HEK293 (cell line): ENCODE measurements at regions of chr1 and their contacts with region 1.

Region 1: DNA sequence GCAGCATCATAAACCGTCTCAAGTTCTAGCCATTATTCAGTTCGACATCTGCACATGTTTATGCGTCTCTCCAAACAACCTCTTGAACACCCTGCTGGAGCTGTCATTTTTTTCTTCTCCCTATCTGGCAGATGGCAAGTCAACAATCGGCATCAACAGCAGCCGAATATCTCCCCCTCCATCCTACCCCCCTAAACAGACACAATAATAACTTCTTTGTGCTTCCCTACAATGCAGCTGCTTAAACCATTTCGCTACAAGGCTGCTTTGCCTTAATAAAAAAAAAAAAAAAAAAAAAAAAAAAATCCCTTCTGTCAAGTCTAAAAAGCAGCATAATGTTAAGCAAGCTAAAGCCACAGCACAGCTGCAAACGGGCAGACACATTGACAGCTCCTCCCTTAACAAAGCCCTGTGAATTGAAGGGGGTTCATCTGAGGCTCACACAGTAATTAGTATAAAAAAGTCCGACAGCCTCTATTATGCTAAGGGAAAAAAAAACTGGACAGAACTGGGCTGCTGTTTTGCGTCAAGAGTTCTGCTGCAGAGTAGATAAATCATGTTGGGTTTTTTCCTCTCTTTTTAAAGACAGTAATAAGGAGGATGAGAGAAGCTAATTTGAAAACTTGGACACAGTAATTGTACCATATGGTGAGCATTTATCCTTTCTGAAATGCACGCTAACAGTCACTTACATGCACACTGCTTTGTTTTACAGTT is 136.4 kb downstream of the AKT3 start:
- H3K4me3 ChIP-seq: no peak overlapping the region
- H3K27ac ChIP-seq: no peak overlapping the region
- H3K4me1 ChIP-seq: peaks cover 14% of the 10 kb centered on the region
- CTCF ChIP-seq: no peak

Region 2: GRCh38 chr1:243568793-243569192 is 144.8 kb before region 1 on chr1:
- CTCF ChIA-PET with region 1: no interaction called
- POLR2A ChIA-PET with region 1: no interaction called
- H3K4me3 ChIP-seq: no peak overlapping the region
- H3K27ac ChIP-seq: no peak overlapping the region
- H3K4me1 ChIP-seq: no peaks in the 10 kb centered on the region
- CTCF ChIP-seq: no peak

Region 3: GRCh38 chr1:243701872-243702271 is 11.8 kb before region 1 on chr1:
- CTCF ChIA-PET with region 1: interaction called, 10 read pairs
- POLR2A ChIA-PET with region 1: no interaction called
- H3K4me3 ChIP-seq: no peak overlapping the region
- H3K27ac ChIP-seq: no peak overlapping the region
- H3K4me1 ChIP-seq: peaks cover 3% of the 10 kb centered on the region; the same call in 1 of the 2 replicates
- CTCF ChIP-seq: no peak

Region 4: DNA sequence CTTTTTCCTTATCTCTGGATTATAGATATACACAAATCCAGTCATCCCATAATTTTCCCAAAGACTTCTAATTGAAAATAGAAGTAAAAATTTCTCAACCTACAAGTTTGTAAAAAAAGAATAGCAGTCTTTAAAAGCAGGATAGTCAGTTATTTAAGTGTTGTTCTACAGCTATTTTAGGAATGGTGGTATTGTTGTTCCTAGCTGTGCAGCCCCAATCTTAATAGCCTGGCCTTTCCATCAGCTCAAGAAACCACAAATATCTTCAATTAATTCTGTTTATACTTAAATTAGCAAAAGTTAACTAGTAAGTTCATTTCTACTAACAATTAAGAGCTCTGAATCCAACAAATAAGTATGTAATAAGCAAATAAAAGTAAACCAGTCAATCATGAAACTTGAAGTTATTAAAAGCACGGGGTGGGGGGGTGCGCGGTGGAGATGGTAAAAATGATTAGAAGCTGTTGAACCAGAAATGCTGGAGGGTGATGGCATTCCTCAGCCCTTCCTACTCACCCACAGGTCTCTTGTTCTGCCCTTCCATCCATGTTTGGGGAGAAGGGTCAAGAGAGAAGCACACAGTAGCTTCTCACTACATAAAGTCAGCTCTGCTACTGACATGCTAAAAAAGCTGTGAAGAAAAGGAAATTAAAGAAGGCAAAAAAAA is 72.8 kb after region 1 on chr1:
- CTCF ChIA-PET with region 1: no interaction called
- POLR2A ChIA-PET with region 1: no interaction called
- H3K4me3 ChIP-seq: no peak overlapping the region
- H3K27ac ChIP-seq: no peak overlapping the region
- H3K4me1 ChIP-seq: peaks cover 2% of the 10 kb centered on the region; the same call in 1 of the 2 replicates
- CTCF ChIP-seq: no peak

Region 5: GRCh38 chr1:243850452-243851256 is 137.0 kb after region 1 on chr1:
- CTCF ChIA-PET with region 1: no interaction called
- POLR2A ChIA-PET with region 1: no interaction called
- H3K4me3 ChIP-seq: peak overlapping the region; percentile 89
- H3K27ac ChIP-seq: peak overlapping the region; percentile 99
- H3K4me1 ChIP-seq: peaks cover 18% of the 10 kb centered on the region
- CTCF ChIP-seq: no peak